CD8-positive, alpha-beta T cell (primary cell): ENCODE measurements at regions of chr11 and their contacts with region 1.

Region 1: GRCh38 chr11:17384002-17384511 is 4.4 kb downstream of the KCNJ11 start:
- DNase-seq: peak; percentile 51 to 87 (median 79)
- ATAC-seq: peak; percentile 68
- H3K4me3 ChIP-seq: no peak overlapping the region
- H3K4me3 Mint-ChIP-seq: no peak overlapping the region
- H3K27ac ChIP-seq: no peak overlapping the region
- H3K27ac Mint-ChIP-seq: no peak overlapping the region
- H3K4me1 ChIP-seq: no peaks in the 10 kb centered on the region
- H3K4me1 Mint-ChIP-seq: no peaks in the 10 kb centered on the region
- H3K27me3 ChIP-seq: peaks cover 0 to 2% of the 10 kb centered on the region in 2 experiments
- H3K27me3 Mint-ChIP-seq: no peaks in the 10 kb centered on the region
- CTCF ChIP-seq: peak; percentile 86

Region 2: GRCh38 chr11:17230867-17231851 is 152.9 kb before region 1 on chr11:
- CTCF ChIA-PET with region 1: interaction called, 19 read pairs
- POLR2A ChIA-PET with region 1: no interaction called
- intact Hi-C with region 1: loop called (anchors 1 kb)
- DNase-seq: peak in 2 of 9 experiments; percentile 34 to 64
- ATAC-seq: peak; percentile 81
- H3K4me3 ChIP-seq: no peak overlapping the region
- H3K4me3 Mint-ChIP-seq: no peak overlapping the region
- H3K27ac ChIP-seq: no peak overlapping the region
- H3K27ac Mint-ChIP-seq: no peak overlapping the region
- H3K4me1 ChIP-seq: peaks cover 5% of the 10 kb centered on the region
- H3K4me1 Mint-ChIP-seq: peaks cover 13% of the 10 kb centered on the region
- H3K27me3 ChIP-seq: no peaks in the 10 kb centered on the region
- H3K27me3 Mint-ChIP-seq: no peaks in the 10 kb centered on the region
- CTCF ChIP-seq: no peak

Region 3: DNA sequence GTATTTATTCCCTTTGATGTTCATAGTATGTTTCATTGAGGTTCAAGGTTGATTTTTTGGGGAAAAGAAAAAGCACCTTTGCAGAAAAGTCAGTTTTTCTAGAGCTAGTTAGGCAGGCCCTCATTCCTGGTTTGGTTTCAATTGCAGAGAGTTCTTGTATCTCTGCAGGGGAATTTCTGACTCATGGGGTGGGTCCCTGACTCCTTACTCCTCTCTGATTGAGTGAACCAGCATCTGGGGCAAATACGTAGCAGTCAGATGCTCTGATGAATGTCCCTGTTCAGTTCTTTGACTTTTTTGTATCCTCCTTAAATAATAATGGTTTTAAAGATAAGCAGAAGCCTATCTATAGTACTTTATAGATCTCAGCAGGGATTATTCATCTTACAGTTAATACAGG is 40.1 kb before region 1 on chr11:
- CTCF ChIA-PET with region 1: no interaction called
- POLR2A ChIA-PET with region 1: no interaction called
- intact Hi-C with region 1: no loop called
- DNase-seq: no peak
- ATAC-seq: no peak
- H3K4me3 ChIP-seq: no peak overlapping the region
- H3K4me3 Mint-ChIP-seq: no peak overlapping the region
- H3K27ac ChIP-seq: no peak overlapping the region
- H3K27ac Mint-ChIP-seq: no peak overlapping the region
- H3K4me1 ChIP-seq: no peaks in the 10 kb centered on the region
- H3K4me1 Mint-ChIP-seq: peaks cover 4% of the 10 kb centered on the region
- H3K27me3 ChIP-seq: no peaks in the 10 kb centered on the region
- H3K27me3 Mint-ChIP-seq: no peaks in the 10 kb centered on the region
- CTCF ChIP-seq: no peak

Region 4: GRCh38 chr11:17400048-17400775 is 16.2 kb after region 1 on chr11:
- CTCF ChIA-PET with region 1: interaction called, 15 read pairs
- POLR2A ChIA-PET with region 1: no interaction called
- intact Hi-C with region 1: no loop called
- DNase-seq: no peak
- ATAC-seq: no peak
- H3K4me3 ChIP-seq: no peak overlapping the region
- H3K4me3 Mint-ChIP-seq: no peak overlapping the region
- H3K27ac ChIP-seq: no peak overlapping the region
- H3K27ac Mint-ChIP-seq: no peak overlapping the region
- H3K4me1 ChIP-seq: no peaks in the 10 kb centered on the region
- H3K4me1 Mint-ChIP-seq: peaks cover 2% of the 10 kb centered on the region
- H3K27me3 ChIP-seq: no peaks in the 10 kb centered on the region
- H3K27me3 Mint-ChIP-seq: peaks cover 2% of the 10 kb centered on the region
- CTCF ChIP-seq: no peak

Region 5: GRCh38 chr11:17528181-17528691 is 144.2 kb after region 1 on chr11:
- CTCF ChIA-PET with region 1: interaction called, 23 read pairs
- POLR2A ChIA-PET with region 1: interaction called, 4 read pairs
- intact Hi-C with region 1: loop called in 1 of 2 experiments (anchors 1 kb)
- DNase-seq: peak in 6 of 9 experiments; percentile 15 to 60 (median 35)
- ATAC-seq: peak; percentile 55
- H3K4me3 ChIP-seq: no peak overlapping the region
- H3K4me3 Mint-ChIP-seq: no peak overlapping the region
- H3K27ac ChIP-seq: no peak overlapping the region
- H3K27ac Mint-ChIP-seq: no peak overlapping the region
- H3K4me1 ChIP-seq: no peaks in the 10 kb centered on the region
- H3K4me1 Mint-ChIP-seq: no peaks in the 10 kb centered on the region
- H3K27me3 ChIP-seq: no peaks in the 10 kb centered on the region
- H3K27me3 Mint-ChIP-seq: peaks cover 5% of the 10 kb centered on the region
- CTCF ChIP-seq: peak; percentile 34